Activated B cell treated with CpG ODN at 0.5 μM for 24 hours (primary cell): ENCODE measurements at regions of chr1 and their contacts with region 1.

Region 1: GRCh38 chr1:8482979-8483391 is 165.1 kb downstream of the SLC45A1 start:
- DNase-seq: no peak
- ATAC-seq: no peak
- H3K4me3 Mint-ChIP-seq: no peak overlapping the region
- H3K27ac Mint-ChIP-seq: no peak overlapping the region
- H3K4me1 Mint-ChIP-seq: peaks cover 7% of the 10 kb centered on the region
- H3K27me3 Mint-ChIP-seq: no peaks in the 10 kb centered on the region
- CTCF ChIP-seq: no peak

Region 2: GRCh38 chr1:8456308-8456912 is 26.6 kb before region 1 on chr1:
- CTCF ChIA-PET with region 1: no interaction called
- POLR2A ChIA-PET with region 1: interaction called, 19 read pairs
- intact Hi-C with region 1: no loop called
- DNase-seq: no peak
- ATAC-seq: no peak
- H3K4me3 Mint-ChIP-seq: no peak overlapping the region
- H3K27ac Mint-ChIP-seq: no peak overlapping the region
- H3K4me1 Mint-ChIP-seq: peaks cover 38% of the 10 kb centered on the region
- H3K27me3 Mint-ChIP-seq: no peaks in the 10 kb centered on the region
- CTCF ChIP-seq: no peak

Region 3: DNA sequence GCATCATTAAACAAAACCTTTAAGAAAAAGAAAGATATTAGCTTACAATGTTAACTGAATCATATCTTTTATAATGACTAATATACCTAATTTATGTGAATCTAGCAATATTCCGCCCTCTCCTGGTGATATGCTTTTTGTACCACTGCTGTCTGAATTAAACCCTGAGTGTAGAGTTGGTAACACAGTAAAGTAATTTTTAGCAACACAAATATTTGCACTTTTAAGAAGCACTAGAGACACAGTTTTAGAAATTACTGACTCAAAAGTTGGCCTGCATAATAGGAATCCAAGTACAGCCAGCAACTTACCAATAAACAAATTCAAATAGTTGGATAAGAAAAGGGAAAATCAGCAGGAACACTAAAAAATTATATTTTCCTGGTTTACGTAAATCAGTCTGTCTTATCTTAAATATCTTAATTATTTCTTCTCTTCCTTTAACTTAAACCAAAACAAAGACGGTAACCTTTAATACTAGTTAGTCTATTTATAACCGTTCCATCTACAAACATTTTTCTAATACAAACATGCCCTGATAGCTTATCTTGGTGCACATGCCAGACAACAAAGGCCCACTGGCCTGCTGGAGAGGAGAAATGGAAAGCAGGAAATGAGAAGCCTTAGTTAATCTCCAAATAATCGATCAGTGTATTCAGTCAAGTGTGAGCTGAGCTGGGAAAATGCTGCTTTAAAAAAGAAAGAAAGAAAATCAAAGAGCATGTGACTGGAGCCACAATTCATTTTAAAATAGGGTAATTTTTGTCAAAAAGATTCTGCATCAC is 88.4 kb after region 1 on chr1:
- CTCF ChIA-PET with region 1: no interaction called
- POLR2A ChIA-PET with region 1: no interaction called
- intact Hi-C with region 1: no loop called
- DNase-seq: no peak
- ATAC-seq: no peak
- H3K4me3 Mint-ChIP-seq: no peak overlapping the region
- H3K27ac Mint-ChIP-seq: no peak overlapping the region
- H3K4me1 Mint-ChIP-seq: peaks cover 11% of the 10 kb centered on the region
- H3K27me3 Mint-ChIP-seq: no peaks in the 10 kb centered on the region
- CTCF ChIP-seq: no peak

Region 4: DNA sequence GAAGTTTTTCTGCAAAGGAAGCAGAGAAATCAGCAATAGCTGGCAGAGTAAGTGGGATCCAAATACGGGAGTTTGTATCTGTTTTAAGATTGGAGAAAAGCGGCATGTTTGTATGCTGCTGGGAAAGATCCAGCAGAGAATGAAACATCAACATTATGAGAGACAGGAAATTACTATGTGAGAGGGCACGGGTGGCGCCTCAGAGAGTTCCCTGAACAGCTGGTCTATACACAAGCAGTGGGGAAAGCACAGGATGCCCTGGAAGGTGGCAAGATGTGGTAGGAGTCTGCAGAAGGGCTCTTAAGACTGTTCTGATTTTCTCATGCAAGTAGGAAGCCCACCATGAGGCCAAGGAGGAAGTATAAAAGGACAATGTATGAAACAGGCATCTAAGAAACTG is 204.1 kb after region 1 on chr1:
- CTCF ChIA-PET with region 1: no interaction called
- POLR2A ChIA-PET with region 1: no interaction called
- intact Hi-C with region 1: no loop called
- DNase-seq: no peak
- ATAC-seq: no peak
- H3K4me3 Mint-ChIP-seq: peak overlapping the region; percentile 16
- H3K27ac Mint-ChIP-seq: peak overlapping the region; percentile 50
- H3K4me1 Mint-ChIP-seq: peaks cover 69% of the 10 kb centered on the region
- H3K27me3 Mint-ChIP-seq: no peaks in the 10 kb centered on the region
- CTCF ChIP-seq: no peak